ENCODE measurements at regions of chr10 and their contacts with region 1.

Region 1: GRCh38 chr10:88091490-88092105 is 228.2 kb downstream of the PTEN start:
- DNase-seq: peak; percentile 68
- CTCF ChIP-seq: no peak

Region 2: GRCh38 chr10:88106366-88106765 is 14.8 kb after region 1 on chr10:
- CTCF ChIA-PET with region 1: interaction called, 33 read pairs
- POLR2A ChIA-PET with region 1: no interaction called
- DNase-seq: no peak
- CTCF ChIP-seq: no peak

Region 3: GRCh38 chr10:88131511-88132154 is 40.0 kb after region 1 on chr10:
- CTCF ChIA-PET with region 1: no interaction called
- POLR2A ChIA-PET with region 1: no interaction called
- DNase-seq: no peak
- CTCF ChIP-seq: no peak

Region 4: DNA sequence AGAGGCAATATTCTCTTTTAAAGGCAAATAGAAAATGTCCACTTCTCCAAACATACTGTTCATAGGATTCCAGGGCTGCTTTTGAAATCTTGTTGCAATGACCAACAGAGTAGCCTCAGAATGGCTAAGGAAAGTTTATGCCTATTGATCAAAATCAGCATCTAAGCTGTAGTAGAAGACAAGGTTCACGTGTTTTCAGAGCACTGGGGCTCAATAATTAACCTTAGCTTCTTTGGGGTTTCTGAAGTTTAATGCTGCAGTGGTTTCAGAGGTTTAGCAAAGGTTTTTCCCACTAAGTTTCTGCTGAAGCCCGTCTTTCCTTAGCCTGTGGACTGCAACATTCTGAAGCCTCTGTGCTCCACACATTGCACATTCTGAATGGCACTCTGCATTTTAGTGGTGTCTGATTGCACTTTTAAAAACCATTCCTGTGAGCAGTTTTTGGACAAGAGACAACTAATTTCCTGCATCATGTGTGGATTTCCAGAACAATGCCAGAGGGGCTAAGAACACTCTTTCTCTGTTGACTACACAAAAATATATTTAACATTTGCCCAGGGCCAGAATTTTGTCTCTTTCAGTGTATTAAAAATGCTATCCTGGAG is 114.3 kb after region 1 on chr10:
- CTCF ChIA-PET with region 1: no interaction called
- POLR2A ChIA-PET with region 1: no interaction called
- DNase-seq: peak; percentile 15
- CTCF ChIP-seq: no peak